HAP-1 (cell line): ENCODE measurements at regions of chr18 and their contacts with region 1.

Region 1: DNA sequence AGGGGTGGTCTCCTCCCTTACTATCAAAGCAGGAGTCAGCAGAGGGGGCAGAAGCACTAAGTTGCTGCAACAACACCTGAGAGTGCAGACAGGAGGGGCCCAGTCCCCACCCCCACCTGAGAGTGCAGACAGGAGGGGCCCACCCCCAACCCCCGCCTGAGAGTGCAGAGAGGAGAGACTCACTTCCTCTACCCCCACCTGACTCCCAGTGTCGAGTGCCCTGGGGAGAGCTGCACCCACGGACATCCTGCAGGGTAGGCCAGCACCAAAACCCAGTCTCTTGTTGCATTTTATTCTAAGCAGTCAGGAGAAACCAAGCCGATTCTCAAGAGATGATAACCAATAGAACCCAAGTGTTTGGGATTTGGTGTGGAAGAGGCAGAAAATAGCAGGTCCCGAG is 78.4 kb downstream of the NAPG start:
- DNase-seq: no peak
- H3K4me3 ChIP-seq: no peak overlapping the region
- H3K4me1 ChIP-seq: no peaks in the 10 kb centered on the region
- H3K27me3 ChIP-seq: no peaks in the 10 kb centered on the region

Region 2: GRCh38 chr18:12233378-12233777 is 1629.2 kb after region 1 on chr18:
- in situ Hi-C with region 1: loop called (anchors 5 kb)
- DNase-seq: no peak
- H3K4me3 ChIP-seq: no peak overlapping the region
- H3K4me1 ChIP-seq: no peaks in the 10 kb centered on the region; the same call in 1 of the 2 replicates
- H3K27me3 ChIP-seq: no peaks in the 10 kb centered on the region